Mammary epithelial cell (primary cell): ENCODE measurements at regions of chr1 and their contacts with region 1.

Region 1: GRCh38 chr1:119275145-119276134 is 93.1 kb upstream of the HAO2 start:
- DNase-seq: peak; percentile 53
- H3K4me3 ChIP-seq: no peak overlapping the region
- H3K27ac ChIP-seq: no peak overlapping the region
- H3K4me1 ChIP-seq: peaks cover 21% of the 10 kb centered on the region
- H3K27me3 ChIP-seq: no peaks in the 10 kb centered on the region
- CTCF ChIP-seq: peak; percentile 93 to 98

Region 2: GRCh38 chr1:118204648-118205047 is 1070.8 kb before region 1 on chr1:
- CTCF ChIA-PET with region 1: no interaction called
- dilution Hi-C with region 1: no loop called
- in situ Hi-C with region 1: no loop called
- intact Hi-C with region 1: loop called (anchors 5 kb)
- DNase-seq: no peak
- H3K4me3 ChIP-seq: no peak overlapping the region
- H3K27ac ChIP-seq: no peak overlapping the region
- H3K4me1 ChIP-seq: peaks cover 20% of the 10 kb centered on the region
- H3K27me3 ChIP-seq: no peaks in the 10 kb centered on the region
- CTCF ChIP-seq: no peak

Region 3: GRCh38 chr1:119008483-119009311 is 266.7 kb before region 1 on chr1:
- CTCF ChIA-PET with region 1: no interaction called
- dilution Hi-C with region 1: no loop called
- in situ Hi-C with region 1: no loop called
- intact Hi-C with region 1: loop called (anchors 10 kb)
- DNase-seq: peak; percentile 32
- H3K4me3 ChIP-seq: no peak overlapping the region
- H3K27ac ChIP-seq: no peak overlapping the region
- H3K4me1 ChIP-seq: peaks cover 38% of the 10 kb centered on the region
- H3K27me3 ChIP-seq: peaks cover 12% of the 10 kb centered on the region
- CTCF ChIP-seq: peak; percentile 47 to 55

Region 4: GRCh38 chr1:119133987-119134386 is 141.5 kb before region 1 on chr1:
- CTCF ChIA-PET with region 1: no interaction called
- dilution Hi-C with region 1: no loop called
- in situ Hi-C with region 1: no loop called
- intact Hi-C with region 1: no loop called
- DNase-seq: no peak
- H3K4me3 ChIP-seq: no peak overlapping the region
- H3K27ac ChIP-seq: no peak overlapping the region
- H3K4me1 ChIP-seq: peaks cover 10% of the 10 kb centered on the region
- H3K27me3 ChIP-seq: no peaks in the 10 kb centered on the region
- CTCF ChIP-seq: no peak

Region 5: GRCh38 chr1:119225831-119226230 is 49.6 kb before region 1 on chr1:
- CTCF ChIA-PET with region 1: no interaction called
- dilution Hi-C with region 1: no loop called
- in situ Hi-C with region 1: no loop called
- intact Hi-C with region 1: loop called (anchors 2 kb)
- DNase-seq: no peak
- H3K4me3 ChIP-seq: no peak overlapping the region
- H3K27ac ChIP-seq: no peak overlapping the region
- H3K4me1 ChIP-seq: no peaks in the 10 kb centered on the region
- H3K27me3 ChIP-seq: no peaks in the 10 kb centered on the region
- CTCF ChIP-seq: peak; percentile 27 to 59

Region 6: DNA sequence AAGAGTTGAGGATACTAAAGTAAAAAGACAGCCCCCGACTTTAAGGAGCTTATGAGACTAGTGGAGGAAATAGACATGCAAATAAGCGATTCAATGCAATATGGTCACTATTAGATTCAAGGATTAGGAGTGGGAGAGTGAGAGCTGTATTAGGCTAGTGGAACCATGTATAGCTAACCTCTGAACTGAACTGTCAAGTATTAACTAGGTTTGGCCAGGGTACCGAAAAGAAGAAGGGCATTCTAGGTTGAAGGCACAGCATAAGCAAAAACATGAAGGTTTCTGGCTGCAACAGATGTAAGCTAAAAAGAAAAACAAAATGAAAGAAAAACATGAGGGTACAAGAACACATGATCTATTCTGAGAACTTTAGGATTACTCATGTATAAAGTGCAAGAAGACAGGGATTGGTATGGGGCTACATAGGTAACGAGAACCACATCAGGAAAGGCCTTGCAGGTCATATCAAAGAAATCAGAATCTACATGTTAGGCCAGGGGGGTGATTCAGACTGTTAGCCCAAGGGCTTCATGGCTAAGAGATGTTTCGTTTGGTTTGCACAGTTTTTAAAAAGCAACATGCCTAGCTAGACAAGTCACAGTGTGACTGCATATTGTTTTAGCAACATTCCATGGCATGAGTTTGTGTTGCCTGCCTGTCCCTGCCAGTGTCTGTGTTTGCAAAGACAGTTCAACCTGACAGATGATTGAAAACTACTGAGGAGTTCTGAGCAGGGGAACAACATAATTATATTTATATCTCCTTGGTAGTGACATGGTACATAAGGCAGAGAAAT is 38.8 kb after region 1 on chr1:
- CTCF ChIA-PET with region 1: no interaction called
- dilution Hi-C with region 1: no loop called
- in situ Hi-C with region 1: no loop called
- intact Hi-C with region 1: no loop called
- DNase-seq: peak; percentile 28
- H3K4me3 ChIP-seq: no peak overlapping the region
- H3K27ac ChIP-seq: no peak overlapping the region
- H3K4me1 ChIP-seq: no peaks in the 10 kb centered on the region
- H3K27me3 ChIP-seq: no peaks in the 10 kb centered on the region
- CTCF ChIP-seq: no peak

Region 7: GRCh38 chr1:119475866-119476439 is 200.5 kb after region 1 on chr1:
- CTCF ChIA-PET with region 1: no interaction called
- dilution Hi-C with region 1: no loop called
- in situ Hi-C with region 1: no loop called
- intact Hi-C with region 1: loop called (anchors 5 kb)
- DNase-seq: peak; percentile 64
- H3K4me3 ChIP-seq: no peak overlapping the region
- H3K27ac ChIP-seq: no peak overlapping the region
- H3K4me1 ChIP-seq: no peaks in the 10 kb centered on the region
- H3K27me3 ChIP-seq: no peaks in the 10 kb centered on the region
- CTCF ChIP-seq: peak; percentile 92 to 95